ENCODE measurements at regions of chr3 and their contacts with region 1.

Region 1: GRCh38 chr3:5026331-5027218 is 47.3 kb downstream of the BHLHE40 start:
- DNase-seq: peak; percentile 27 to 71 (median 69)
- H3K4me3 ChIP-seq: peak overlapping the region; percentile 78
- H3K4me3 Mint-ChIP-seq: peak overlapping the region; percentile 82 to 90 (median 87)
- H3K27ac ChIP-seq: peak overlapping the region; percentile 47
- H3K27ac Mint-ChIP-seq: peak overlapping the region; percentile 78 to 97 (median 88)
- H3K4me1 ChIP-seq: peaks cover 2% of the 10 kb centered on the region
- H3K4me1 Mint-ChIP-seq: peaks cover 18 to 23% (median 22%) of the 10 kb centered on the region in 3 donors
- H3K27me3 ChIP-seq: no peaks in the 10 kb centered on the region
- H3K27me3 Mint-ChIP-seq: peaks cover 0 to 3% of the 10 kb centered on the region in 2 donors

Region 2: GRCh38 chr3:4712143-4712542 is 314.4 kb before region 1 on chr3:
- CTCF ChIA-PET with region 1: interaction called, 103 read pairs
- POLR2A ChIA-PET with region 1: interaction called, 3 read pairs
- DNase-seq: no peak
- H3K4me3 ChIP-seq: no peak overlapping the region
- H3K4me3 Mint-ChIP-seq: no peak overlapping the region
- H3K27ac ChIP-seq: no peak overlapping the region
- H3K27ac Mint-ChIP-seq: no peak overlapping the region
- H3K4me1 ChIP-seq: no peaks in the 10 kb centered on the region
- H3K4me1 Mint-ChIP-seq: no peaks in the 10 kb centered on the region
- H3K27me3 ChIP-seq: no peaks in the 10 kb centered on the region
- H3K27me3 Mint-ChIP-seq: no peaks in the 10 kb centered on the region

Region 3: DNA sequence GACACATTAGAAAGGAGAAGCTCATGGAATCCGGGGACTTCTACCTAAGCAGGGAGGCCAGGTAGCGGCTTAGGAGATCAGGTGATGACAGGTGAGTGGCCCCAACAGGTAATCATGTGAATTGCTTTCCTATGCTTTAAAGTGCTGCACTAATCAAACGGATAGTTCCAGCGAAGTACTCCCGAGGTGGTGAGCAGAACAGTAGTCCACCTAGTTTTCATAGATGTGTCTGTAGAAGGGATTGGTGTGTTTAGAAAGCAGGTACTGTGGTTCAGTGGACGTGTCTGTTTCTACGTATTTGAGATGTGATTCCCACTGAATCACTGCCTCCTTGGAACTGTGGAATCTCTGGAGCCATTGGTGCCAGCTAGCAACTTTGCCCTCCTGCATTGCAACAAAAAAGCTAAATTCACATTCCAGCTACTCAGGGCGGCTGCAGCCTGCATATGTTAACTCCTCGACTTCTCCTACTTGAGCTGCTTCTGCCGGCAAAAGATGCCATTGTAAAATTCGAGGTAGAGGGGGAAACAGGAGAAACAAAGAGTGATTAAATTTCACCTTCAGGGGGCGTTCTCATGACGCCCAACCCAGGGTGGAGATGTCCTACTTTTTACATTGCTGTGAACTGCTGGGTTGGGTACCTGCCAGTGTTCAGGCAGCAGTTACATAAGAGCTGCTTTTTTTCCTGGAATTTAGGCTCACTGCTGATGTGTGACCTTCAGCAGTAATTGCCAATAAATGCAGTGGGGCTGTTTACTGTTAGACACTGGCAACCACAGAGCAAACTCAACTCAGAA is 306.1 kb before region 1 on chr3:
- CTCF ChIA-PET with region 1: interaction called, 10 read pairs
- POLR2A ChIA-PET with region 1: no interaction called
- DNase-seq: peak in 2 of 5 donors; percentile 16 to 21
- H3K4me3 ChIP-seq: no peak overlapping the region
- H3K4me3 Mint-ChIP-seq: no peak overlapping the region
- H3K27ac ChIP-seq: no peak overlapping the region
- H3K27ac Mint-ChIP-seq: peak overlapping the region in 5 of 8 donors; percentile 10 to 81 (median 62)
- H3K4me1 ChIP-seq: no peaks in the 10 kb centered on the region
- H3K4me1 Mint-ChIP-seq: peaks cover 0 to 26% (median 2%) of the 10 kb centered on the region in 3 donors
- H3K27me3 ChIP-seq: no peaks in the 10 kb centered on the region
- H3K27me3 Mint-ChIP-seq: no peaks in the 10 kb centered on the region

Region 4: DNA sequence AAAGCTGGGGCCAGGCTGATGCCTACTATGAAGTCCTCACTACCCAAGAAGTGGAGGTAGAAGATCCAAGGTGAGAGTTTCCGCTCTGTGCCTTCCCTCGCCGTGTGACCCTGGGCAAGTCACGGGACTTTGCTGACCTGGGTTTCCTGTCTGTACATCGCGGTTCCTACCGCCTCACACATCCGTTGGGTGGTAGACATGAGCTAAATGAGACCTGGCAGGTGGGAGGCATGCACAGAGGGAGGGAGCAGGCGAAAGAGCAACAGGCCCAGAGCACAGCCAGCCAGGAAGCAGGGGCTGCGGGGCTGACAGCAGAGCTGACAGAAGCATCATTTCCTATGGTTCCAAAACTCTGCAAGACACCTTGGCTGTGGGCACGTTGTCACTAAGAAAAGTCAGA is 204.6 kb before region 1 on chr3:
- CTCF ChIA-PET with region 1: interaction called, 11 read pairs
- POLR2A ChIA-PET with region 1: no interaction called
- DNase-seq: peak; percentile 79 to 93 (median 85)
- H3K4me3 ChIP-seq: no peak overlapping the region
- H3K4me3 Mint-ChIP-seq: peak overlapping the region; percentile 1 to 74 (median 63)
- H3K27ac ChIP-seq: peak overlapping the region; percentile 5
- H3K27ac Mint-ChIP-seq: peak overlapping the region; percentile 89 to 99 (median 99)
- H3K4me1 ChIP-seq: peaks cover 58% of the 10 kb centered on the region
- H3K4me1 Mint-ChIP-seq: peaks cover 53 to 71% (median 68%) of the 10 kb centered on the region in 3 donors
- H3K27me3 ChIP-seq: no peaks in the 10 kb centered on the region
- H3K27me3 Mint-ChIP-seq: no peaks in the 10 kb centered on the region

Region 5: DNA sequence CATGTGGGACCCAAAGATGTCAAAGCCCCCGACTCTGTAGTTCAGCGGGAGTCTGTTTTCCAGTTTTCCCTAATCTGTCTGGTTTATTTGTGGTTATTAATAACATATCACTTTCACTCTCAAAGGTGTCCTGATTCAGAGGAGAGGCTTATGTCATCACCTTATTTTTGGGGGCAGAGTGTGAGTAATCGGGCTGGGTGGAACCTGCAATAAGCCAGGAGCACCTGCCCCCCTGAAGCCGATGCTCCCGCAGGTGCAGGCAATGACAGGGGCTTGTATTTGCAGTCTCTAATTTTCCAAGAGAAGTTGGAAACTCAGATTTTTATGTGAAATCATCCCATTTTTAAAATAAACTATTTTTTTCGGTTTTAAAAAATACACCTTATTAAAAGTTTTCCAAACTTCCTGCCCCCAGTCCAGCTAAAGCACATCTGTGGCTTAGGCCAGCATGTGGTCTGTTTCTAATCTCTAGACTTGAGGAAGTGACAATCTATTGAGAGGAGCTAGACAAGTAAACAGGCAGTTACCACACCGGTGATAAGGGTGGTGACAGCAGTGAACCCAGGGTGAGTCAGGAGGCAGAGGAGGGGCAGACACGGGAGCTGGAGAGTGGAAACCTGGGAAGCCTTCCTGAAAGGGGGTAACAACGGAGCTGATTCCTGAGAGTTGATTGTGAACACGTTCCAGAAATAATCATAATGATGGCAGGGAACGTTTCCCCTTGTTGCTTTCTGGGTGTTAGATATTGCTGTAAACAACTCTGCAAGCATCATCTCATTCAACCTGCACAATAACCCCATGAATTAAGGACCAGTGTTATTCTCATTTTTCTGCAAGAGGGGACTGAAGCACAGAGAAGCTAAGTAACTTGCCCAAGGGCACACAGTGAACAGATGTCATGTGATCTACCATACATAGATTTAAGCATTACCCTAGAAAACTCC is 10.1 kb before region 1 on chr3:
- CTCF ChIA-PET with region 1: interaction called, 18 read pairs
- POLR2A ChIA-PET with region 1: interaction called, 8 read pairs
- DNase-seq: peak in 4 of 5 donors; percentile 14 to 62 (median 35)
- H3K4me3 ChIP-seq: no peak overlapping the region
- H3K4me3 Mint-ChIP-seq: peak overlapping the region in 4 of 7 donors; percentile 5 to 49 (median 30)
- H3K27ac ChIP-seq: peak overlapping the region; percentile 63
- H3K27ac Mint-ChIP-seq: peak overlapping the region; percentile 40 to 96 (median 92)
- H3K4me1 ChIP-seq: peaks cover 55% of the 10 kb centered on the region
- H3K4me1 Mint-ChIP-seq: peaks cover 49 to 72% (median 61%) of the 10 kb centered on the region in 3 donors
- H3K27me3 ChIP-seq: no peaks in the 10 kb centered on the region
- H3K27me3 Mint-ChIP-seq: no peaks in the 10 kb centered on the region

Region 6: DNA sequence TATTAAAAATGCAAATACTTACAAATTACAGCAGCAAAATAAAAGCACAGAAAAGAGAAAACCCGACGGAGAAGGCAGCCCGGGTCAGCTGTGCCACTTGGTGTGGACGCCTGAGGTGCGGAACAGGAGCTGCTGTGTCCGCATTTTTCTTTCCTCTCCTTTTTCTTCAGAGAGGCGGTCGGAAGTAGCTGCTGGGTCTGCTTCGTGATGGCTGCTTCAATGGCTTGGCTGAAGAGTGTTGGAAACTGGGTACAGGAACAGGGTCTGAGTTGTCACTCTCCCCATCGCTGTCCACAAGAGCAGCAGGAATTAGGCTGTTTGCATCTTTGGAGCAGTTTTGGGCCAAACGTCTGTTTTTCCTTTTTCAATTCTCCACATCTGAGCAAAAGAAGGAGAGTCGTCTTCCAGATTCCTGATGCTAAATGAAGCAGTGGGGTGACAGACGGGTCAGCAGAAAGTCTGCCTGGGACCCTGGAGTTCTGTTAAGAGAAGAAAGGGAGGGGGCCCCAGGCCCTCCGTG is 42.0 kb after region 1 on chr3:
- CTCF ChIA-PET with region 1: no interaction called
- POLR2A ChIA-PET with region 1: interaction called, 10 read pairs
- DNase-seq: no peak
- H3K4me3 ChIP-seq: no peak overlapping the region
- H3K4me3 Mint-ChIP-seq: no peak overlapping the region
- H3K27ac ChIP-seq: no peak overlapping the region
- H3K27ac Mint-ChIP-seq: no peak overlapping the region
- H3K4me1 ChIP-seq: no peaks in the 10 kb centered on the region
- H3K4me1 Mint-ChIP-seq: no peaks in the 10 kb centered on the region
- H3K27me3 ChIP-seq: no peaks in the 10 kb centered on the region
- H3K27me3 Mint-ChIP-seq: peaks cover 8 to 18% of the 10 kb centered on the region in 2 donors

Region 7: GRCh38 chr3:5080779-5081525 is 54.4 kb after region 1 on chr3:
- CTCF ChIA-PET with region 1: no interaction called
- POLR2A ChIA-PET with region 1: no interaction called
- DNase-seq: no peak
- H3K4me3 ChIP-seq: no peak overlapping the region
- H3K4me3 Mint-ChIP-seq: no peak overlapping the region
- H3K27ac ChIP-seq: peak overlapping the region; percentile 47
- H3K27ac Mint-ChIP-seq: peak overlapping the region in 1 of 8 donors; percentile 61
- H3K4me1 ChIP-seq: no peaks in the 10 kb centered on the region
- H3K4me1 Mint-ChIP-seq: no peaks in the 10 kb centered on the region
- H3K27me3 ChIP-seq: no peaks in the 10 kb centered on the region
- H3K27me3 Mint-ChIP-seq: peaks cover 7 to 15% of the 10 kb centered on the region in 2 donors